SK-N-SH (cell line): ENCODE measurements at regions of chr20 and their contacts with region 1.

Region 1: GRCh38 chr20:54199721-54200176 is 8.1 kb upstream of the PFDN4 start:
- DNase-seq: peak; percentile 70
- H3K4me3 ChIP-seq: peak overlapping the region in 1 of 2 experiments; percentile 45; a peak in 1 of 4 replicates
- H3K27ac ChIP-seq: no peak overlapping the region
- H3K4me1 ChIP-seq: no peaks in the 10 kb centered on the region
- H3K27me3 ChIP-seq: no peaks in the 10 kb centered on the region
- CTCF ChIP-seq: peak; percentile 97
- EP300 ChIP-seq: no peak
- RAD21 ChIP-seq: peak; percentile 96

Region 2: DNA sequence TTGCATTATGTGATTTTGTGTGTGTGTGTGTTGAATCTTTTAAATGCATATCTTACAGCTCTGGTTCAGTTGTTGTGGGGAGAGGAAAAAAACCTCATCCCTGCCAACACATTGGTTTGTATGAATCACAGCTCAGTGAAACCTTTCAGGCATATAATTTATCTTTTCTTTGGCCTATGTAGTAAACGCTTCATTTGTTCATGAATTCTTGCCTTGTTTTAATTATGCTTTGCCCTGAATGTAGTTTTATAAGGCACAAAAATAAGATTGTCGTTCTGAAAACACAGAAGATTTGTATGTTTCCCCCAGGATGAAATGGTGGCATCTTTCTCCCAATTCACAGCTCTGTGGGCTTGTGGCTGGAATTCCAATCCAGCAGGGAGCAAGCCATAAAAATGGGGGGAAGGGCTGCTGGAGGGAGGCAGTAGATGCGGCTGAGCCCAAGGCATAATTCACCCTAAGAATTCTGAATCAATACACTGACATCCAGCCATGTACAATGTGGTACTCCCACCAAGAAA is 174.4 kb before region 1 on chr20:
- CTCF ChIA-PET with region 1: no interaction called
- POLR2A ChIA-PET with region 1: no interaction called
- DNase-seq: no peak
- H3K4me3 ChIP-seq: no peak overlapping the region
- H3K27ac ChIP-seq: no peak overlapping the region
- H3K4me1 ChIP-seq: peaks cover 0 to 15% of the 10 kb centered on the region in 2 experiments; a peak in 2 of 4 replicates
- H3K27me3 ChIP-seq: no peaks in the 10 kb centered on the region; the same call in 1 of the 2 replicates
- CTCF ChIP-seq: no peak
- EP300 ChIP-seq: no peak
- RAD21 ChIP-seq: no peak

Region 3: GRCh38 chr20:54062812-54063280 is 136.9 kb before region 1 on chr20:
- CTCF ChIA-PET with region 1: interaction called, 10 read pairs
- POLR2A ChIA-PET with region 1: no interaction called
- DNase-seq: peak; percentile 66
- H3K4me3 ChIP-seq: no peak overlapping the region; a peak in 1 of 4 replicates
- H3K27ac ChIP-seq: no peak overlapping the region
- H3K4me1 ChIP-seq: no peaks in the 10 kb centered on the region; a peak in 2 of 4 replicates
- H3K27me3 ChIP-seq: no peaks in the 10 kb centered on the region
- CTCF ChIP-seq: peak; percentile 67
- EP300 ChIP-seq: no peak
- RAD21 ChIP-seq: peak; percentile 90

Region 4: GRCh38 chr20:54076064-54076658 is 123.6 kb before region 1 on chr20:
- CTCF ChIA-PET with region 1: no interaction called
- POLR2A ChIA-PET with region 1: no interaction called
- DNase-seq: no peak
- H3K4me3 ChIP-seq: no peak overlapping the region
- H3K27ac ChIP-seq: no peak overlapping the region
- H3K4me1 ChIP-seq: no peaks in the 10 kb centered on the region; a peak in 2 of 4 replicates
- H3K27me3 ChIP-seq: no peaks in the 10 kb centered on the region
- CTCF ChIP-seq: no peak
- EP300 ChIP-seq: no peak
- RAD21 ChIP-seq: no peak

Region 5: GRCh38 chr20:54140927-54141566 is 58.7 kb before region 1 on chr20:
- CTCF ChIA-PET with region 1: interaction called, 22 read pairs
- POLR2A ChIA-PET with region 1: no interaction called
- DNase-seq: no peak
- H3K4me3 ChIP-seq: no peak overlapping the region
- H3K27ac ChIP-seq: peak overlapping the region in 1 of 2 experiments; percentile 81; a peak in 2 of 4 replicates
- H3K4me1 ChIP-seq: peaks cover 0 to 6% of the 10 kb centered on the region in 2 experiments; a peak in 2 of 4 replicates
- H3K27me3 ChIP-seq: no peaks in the 10 kb centered on the region
- CTCF ChIP-seq: no peak
- EP300 ChIP-seq: peak in 1 of 2 experiments; percentile 39; a peak in 1 of 4 replicates
- RAD21 ChIP-seq: no peak

Region 6: GRCh38 chr20:54179946-54180345 is 19.8 kb before region 1 on chr20:
- CTCF ChIA-PET with region 1: interaction called, 28 read pairs
- POLR2A ChIA-PET with region 1: no interaction called
- DNase-seq: no peak
- H3K4me3 ChIP-seq: no peak overlapping the region
- H3K27ac ChIP-seq: no peak overlapping the region
- H3K4me1 ChIP-seq: no peaks in the 10 kb centered on the region
- H3K27me3 ChIP-seq: no peaks in the 10 kb centered on the region
- CTCF ChIP-seq: no peak
- EP300 ChIP-seq: no peak
- RAD21 ChIP-seq: no peak

Region 7: GRCh38 chr20:54214566-54214965 is 14.8 kb after region 1 on chr20:
- CTCF ChIA-PET with region 1: interaction called, 11 read pairs
- POLR2A ChIA-PET with region 1: no interaction called
- DNase-seq: no peak
- H3K4me3 ChIP-seq: no peak overlapping the region
- H3K27ac ChIP-seq: no peak overlapping the region
- H3K4me1 ChIP-seq: peaks cover 0 to 9% of the 10 kb centered on the region in 2 experiments; a peak in 2 of 4 replicates
- H3K27me3 ChIP-seq: no peaks in the 10 kb centered on the region
- CTCF ChIP-seq: no peak
- EP300 ChIP-seq: no peak
- RAD21 ChIP-seq: no peak

Region 8: DNA sequence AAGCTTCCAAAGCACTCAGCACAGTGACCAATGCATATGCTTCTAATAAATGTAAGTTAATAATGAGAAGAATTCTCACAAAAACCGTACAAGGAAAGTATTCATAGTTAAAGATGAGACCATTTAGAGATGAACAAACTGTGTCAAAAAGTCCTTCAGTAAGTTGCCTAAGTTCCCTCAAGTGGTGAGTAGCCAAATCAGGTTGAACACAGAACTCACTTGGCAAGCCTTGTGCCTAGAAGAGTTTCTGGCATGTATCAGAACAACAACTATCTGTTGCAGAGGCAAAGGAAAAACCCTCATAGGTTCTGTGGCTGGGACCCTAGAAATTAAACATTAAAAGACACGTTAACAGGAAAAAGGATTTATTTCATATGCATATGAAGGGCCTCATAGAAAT is 146.1 kb after region 1 on chr20:
- CTCF ChIA-PET with region 1: no interaction called
- POLR2A ChIA-PET with region 1: no interaction called
- DNase-seq: no peak
- H3K4me3 ChIP-seq: peak overlapping the region; percentile 15 to 20; a peak in 2 of 4 replicates
- H3K27ac ChIP-seq: peak overlapping the region; percentile 80 to 88
- H3K4me1 ChIP-seq: peaks cover 0 to 42% of the 10 kb centered on the region in 2 experiments; a peak in 2 of 4 replicates
- H3K27me3 ChIP-seq: no peaks in the 10 kb centered on the region
- CTCF ChIP-seq: no peak
- EP300 ChIP-seq: no peak
- RAD21 ChIP-seq: no peak